ENCODE measurements at regions of chr1 and their contacts with region 1.

Region 1: GRCh38 chr1:111920221-111921024 is 69.0 kb downstream of the KCND3 start:
- DNase-seq: peak; percentile 75

Region 2: GRCh38 chr1:111904478-111905218 is 15.8 kb before region 1 on chr1:
- intact Hi-C with region 1: loop called (anchors 2 kb)
- DNase-seq: peak; percentile 76

Region 3: GRCh38 chr1:111948209-111949171 is 28.1 kb after region 1 on chr1:
- intact Hi-C with region 1: loop called (anchors 1 kb)
- DNase-seq: peak; percentile 79